ENCODE measurements at regions of chr6 and their contacts with region 1.

Region 1: DNA sequence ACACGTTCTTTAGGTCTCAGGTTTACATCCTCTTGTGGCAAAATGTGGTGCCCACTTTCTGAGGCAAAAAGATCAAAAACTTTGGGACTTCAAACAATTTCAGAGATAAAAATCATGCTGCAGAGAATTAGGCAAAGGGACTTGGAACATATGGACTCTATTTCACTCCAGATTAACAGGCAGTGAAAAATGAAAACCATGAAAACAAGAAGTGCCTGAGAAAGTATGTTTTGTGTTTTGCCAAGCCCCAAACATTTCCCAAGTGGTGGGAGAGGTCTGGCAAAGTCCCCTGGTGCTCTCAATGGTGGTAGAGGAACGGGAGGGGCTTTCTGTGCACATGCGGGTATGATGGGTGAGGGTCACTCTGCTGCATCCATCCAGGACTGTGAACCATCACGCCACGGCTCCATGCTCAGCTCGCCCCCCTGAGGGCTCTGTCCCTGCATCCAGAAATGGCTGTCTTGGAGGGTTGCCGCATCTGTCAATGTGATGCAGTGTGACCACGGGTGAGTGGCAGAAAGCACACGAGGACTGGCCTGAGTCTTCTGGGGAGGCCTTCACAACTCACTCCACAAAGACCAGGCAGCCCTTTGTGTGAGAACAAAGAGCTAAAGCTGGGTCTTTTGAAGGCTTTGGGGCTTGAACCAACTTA is 43.2 kb upstream of the TBC1D7 start:
- DNase-seq: no peak
- H3K4me3 ChIP-seq: no peak overlapping the region
- H3K27ac ChIP-seq: no peak overlapping the region
- H3K4me1 ChIP-seq: no peaks in the 10 kb centered on the region
- H3K27me3 ChIP-seq: no peaks in the 10 kb centered on the region
- CTCF ChIP-seq: no peak
- EP300 ChIP-seq: no peak
- POLR2A ChIP-seq: no peak

Region 2: GRCh38 chr6:13351271-13351670 is 20.3 kb before region 1 on chr6:
- intact Hi-C with region 1: loop called in 1 of 4 experiments (anchors 1 kb)
- DNase-seq: no peak
- H3K4me3 ChIP-seq: no peak overlapping the region
- H3K27ac ChIP-seq: no peak overlapping the region
- H3K4me1 ChIP-seq: no peaks in the 10 kb centered on the region
- H3K27me3 ChIP-seq: no peaks in the 10 kb centered on the region
- CTCF ChIP-seq: no peak
- EP300 ChIP-seq: no peak
- POLR2A ChIP-seq: no peak

Region 3: DNA sequence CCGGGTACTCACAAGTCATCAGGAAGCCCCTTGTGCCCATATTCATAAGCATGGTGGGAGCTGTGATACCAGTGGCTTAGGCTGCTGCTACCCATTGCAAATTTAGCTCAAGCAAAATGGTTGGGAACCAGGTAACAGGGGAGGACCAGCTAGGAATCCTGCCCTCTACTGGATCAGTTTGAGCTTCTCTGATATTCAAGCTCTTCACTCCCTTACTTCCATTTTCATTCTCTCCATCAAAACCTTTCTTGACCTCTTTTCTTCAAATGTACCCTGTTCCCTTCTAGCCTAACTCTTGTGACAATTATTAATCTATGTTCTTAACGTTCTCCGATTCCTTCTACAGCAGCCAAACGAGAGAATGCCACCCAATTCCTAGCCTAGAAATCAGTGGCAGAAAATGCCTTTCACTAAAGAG is 253.3 kb after region 1 on chr6:
- intact Hi-C with region 1: no loop called
- DNase-seq: no peak
- H3K4me3 ChIP-seq: no peak overlapping the region
- H3K27ac ChIP-seq: no peak overlapping the region
- H3K4me1 ChIP-seq: no peaks in the 10 kb centered on the region
- H3K27me3 ChIP-seq: no peaks in the 10 kb centered on the region
- CTCF ChIP-seq: no peak
- EP300 ChIP-seq: no peak
- POLR2A ChIP-seq: no peak